ENCODE measurements at regions of chr10 and their contacts with region 1.

Region 1: DNA sequence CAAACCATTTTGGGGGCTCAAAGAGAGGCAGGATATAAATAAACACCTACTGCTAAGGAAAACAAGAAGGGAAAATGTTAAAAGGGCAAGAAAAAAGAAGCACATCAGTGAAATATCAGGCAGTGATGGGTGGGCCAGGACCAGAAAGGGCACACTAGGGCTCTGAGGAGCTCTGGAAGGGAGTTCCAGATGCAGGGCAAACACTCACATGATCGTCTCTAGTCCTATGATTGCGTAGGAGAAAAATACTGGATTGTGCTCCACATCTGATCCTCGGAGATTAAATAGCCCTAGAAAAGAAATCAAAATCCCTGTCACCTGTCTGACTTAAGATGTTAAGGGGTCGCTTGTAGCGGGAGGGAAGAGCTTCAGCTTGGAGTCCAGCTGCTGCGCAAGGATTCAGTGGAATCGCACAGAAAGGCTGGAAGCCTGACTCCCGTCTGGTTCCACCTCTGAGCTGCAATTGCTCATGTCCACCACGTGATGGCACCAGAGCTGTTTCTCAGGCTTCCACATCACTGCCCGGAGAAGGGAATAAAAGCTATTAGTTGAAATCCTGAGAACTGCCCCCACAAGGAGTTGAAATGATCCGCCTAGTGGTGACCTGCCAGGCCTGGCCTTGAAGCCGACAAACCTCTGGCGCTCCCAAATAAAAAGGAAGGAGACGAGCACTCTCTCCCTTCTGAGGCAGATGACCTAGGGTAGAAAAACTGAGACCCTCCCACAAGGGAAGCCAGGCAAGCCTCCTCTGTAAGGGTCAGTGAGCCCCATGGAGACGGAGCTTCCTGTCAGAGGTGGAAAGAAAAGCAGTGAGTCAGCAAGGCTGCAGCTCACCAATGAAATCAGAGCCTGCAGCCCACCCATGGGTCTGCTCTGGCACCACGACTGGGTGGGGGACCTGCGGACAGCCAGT is 39.2 kb downstream of the XPNPEP1 start:
- H3K4me3 ChIP-seq: no peak overlapping the region
- H3K27ac ChIP-seq: no peak overlapping the region; the same call in 1 of the 2 replicates
- H3K4me1 ChIP-seq: peaks cover 3% of the 10 kb centered on the region; the same call in 1 of the 2 replicates
- CTCF ChIP-seq: peak; percentile 94

Region 2: GRCh38 chr10:109899359-109900331 is 15.5 kb after region 1 on chr10:
- CTCF ChIA-PET with region 1: interaction called, 20 read pairs
- POLR2A ChIA-PET with region 1: interaction called, 3 read pairs
- H3K4me3 ChIP-seq: no peak overlapping the region
- H3K27ac ChIP-seq: no peak overlapping the region
- H3K4me1 ChIP-seq: peaks cover 7% of the 10 kb centered on the region; the same call in 1 of the 2 replicates
- CTCF ChIP-seq: no peak

Region 3: DNA sequence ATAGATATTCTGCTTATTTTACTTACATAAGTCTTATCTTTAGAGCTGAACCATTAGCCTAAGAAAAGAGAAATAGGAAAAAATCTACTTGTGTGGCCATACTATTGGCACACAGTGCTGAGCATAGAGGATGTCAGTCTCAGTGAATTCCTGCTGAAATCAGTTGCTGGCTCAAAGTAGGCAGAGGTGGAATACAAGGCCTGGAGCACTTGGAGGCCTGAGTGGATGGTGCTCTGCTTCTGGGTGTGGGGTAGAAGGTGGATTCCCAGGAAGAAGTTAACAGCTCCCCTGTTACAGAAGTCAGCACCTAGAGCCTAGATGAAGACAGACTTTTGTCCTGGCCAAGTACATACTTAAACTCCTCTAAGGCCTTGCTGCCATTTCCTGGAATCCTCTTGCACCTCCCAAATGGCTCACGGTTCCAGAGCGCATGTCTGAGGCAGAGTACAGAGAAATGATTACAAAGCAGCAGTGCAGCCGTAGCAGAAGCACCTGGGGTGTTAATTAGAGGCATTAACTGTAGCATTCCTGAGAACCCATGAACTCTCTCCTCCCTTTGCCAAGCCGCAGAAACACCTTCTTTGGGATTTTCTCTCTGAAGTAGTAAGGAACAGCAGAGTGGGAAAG is 57.2 kb after region 1 on chr10:
- CTCF ChIA-PET with region 1: no interaction called
- POLR2A ChIA-PET with region 1: no interaction called
- H3K4me3 ChIP-seq: no peak overlapping the region
- H3K27ac ChIP-seq: no peak overlapping the region
- H3K4me1 ChIP-seq: peaks cover 3% of the 10 kb centered on the region; the same call in 1 of the 2 replicates
- CTCF ChIP-seq: no peak

Region 4: GRCh38 chr10:109956454-109957091 is 72.5 kb after region 1 on chr10:
- CTCF ChIA-PET with region 1: interaction called, 18 read pairs
- POLR2A ChIA-PET with region 1: no interaction called
- H3K4me3 ChIP-seq: no peak overlapping the region
- H3K27ac ChIP-seq: no peak overlapping the region
- H3K4me1 ChIP-seq: peaks cover 10% of the 10 kb centered on the region
- CTCF ChIP-seq: no peak

Region 5: DNA sequence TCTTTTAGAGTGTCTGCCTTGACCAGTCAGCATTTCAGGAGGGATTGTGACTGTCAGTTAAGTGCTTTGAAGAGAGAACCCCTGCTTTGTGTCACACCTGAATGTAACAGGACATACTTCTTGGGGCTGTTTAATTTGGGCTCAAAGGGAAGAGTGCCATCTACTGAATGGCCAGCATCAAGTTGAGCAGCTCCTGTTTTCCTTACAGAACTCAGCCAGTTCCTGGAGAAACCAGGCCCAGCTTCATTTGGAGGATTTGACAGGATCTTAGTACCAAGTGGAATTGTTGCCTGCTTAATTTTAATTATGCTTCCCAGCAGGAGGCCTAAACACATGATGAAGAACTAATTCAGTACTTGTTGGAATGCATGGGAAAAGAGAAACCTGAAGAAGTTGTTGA is 131.9 kb after region 1 on chr10:
- CTCF ChIA-PET with region 1: interaction called, 20 read pairs
- POLR2A ChIA-PET with region 1: no interaction called
- H3K4me3 ChIP-seq: no peak overlapping the region
- H3K27ac ChIP-seq: no peak overlapping the region
- H3K4me1 ChIP-seq: peaks cover 35% of the 10 kb centered on the region
- CTCF ChIP-seq: peak; percentile 40; the same call in 1 of the 2 replicates

Region 6: GRCh38 chr10:110279407-110279986 is 395.4 kb after region 1 on chr10:
- CTCF ChIA-PET with region 1: interaction called, 11 read pairs
- POLR2A ChIA-PET with region 1: no interaction called
- H3K4me3 ChIP-seq: no peak overlapping the region
- H3K27ac ChIP-seq: no peak overlapping the region
- H3K4me1 ChIP-seq: peaks cover 11% of the 10 kb centered on the region
- CTCF ChIP-seq: peak; percentile 65; the same call in 1 of the 2 replicates